Gastrocnemius medialis (tissue), 4 donors: ENCODE measurements at regions of chr3 and their contacts with region 1.

Region 1: GRCh38 chr3:45507820-45508317 is 86.7 kb upstream of the LIMD1 start:
- DNase-seq: peak in 1 of 2 donors; percentile 30
- ATAC-seq: peak in 1 of 2 donors; percentile 34
- H3K4me3 ChIP-seq: no peak overlapping the region
- H3K27ac ChIP-seq: peak overlapping the region in 2 of 4 donors; percentile 8 to 13
- H3K4me1 ChIP-seq: no peaks in the 10 kb centered on the region
- H3K27me3 ChIP-seq: no peaks in the 10 kb centered on the region
- CTCF ChIP-seq: peak in 4 of 5 experiments; percentile 3 to 46 (median 20)
- POLR2A ChIP-seq: no peak

Region 2: GRCh38 chr3:45170096-45170495 is 337.8 kb before region 1 on chr3:
- in situ Hi-C with region 1: no loop called
- intact Hi-C with region 1: no loop called
- DNase-seq: peak; percentile 68 to 74
- ATAC-seq: peak; percentile 49 to 76
- H3K4me3 ChIP-seq: no peak overlapping the region
- H3K27ac ChIP-seq: peak overlapping the region; percentile 43 to 73 (median 63)
- H3K4me1 ChIP-seq: peaks cover 8 to 25% of the 10 kb centered on the region in 2 donors
- H3K27me3 ChIP-seq: no peaks in the 10 kb centered on the region
- CTCF ChIP-seq: no peak
- POLR2A ChIP-seq: no peak

Region 3: GRCh38 chr3:45218578-45219390 is 289.1 kb before region 1 on chr3:
- in situ Hi-C with region 1: no loop called
- intact Hi-C with region 1: loop called (anchors 5 kb)
- DNase-seq: peak; percentile 44 to 64
- ATAC-seq: peak; percentile 65 to 89
- H3K4me3 ChIP-seq: no peak overlapping the region
- H3K27ac ChIP-seq: no peak overlapping the region
- H3K4me1 ChIP-seq: peaks cover 9 to 12% of the 10 kb centered on the region in 2 donors
- H3K27me3 ChIP-seq: no peaks in the 10 kb centered on the region
- CTCF ChIP-seq: no peak
- POLR2A ChIP-seq: no peak

Region 4: GRCh38 chr3:45544781-45545180 is 36.9 kb after region 1 on chr3:
- in situ Hi-C with region 1: no loop called
- intact Hi-C with region 1: loop called (anchors 1 kb)
- DNase-seq: peak in 1 of 2 donors; percentile 64
- ATAC-seq: peak; percentile 10 to 33
- H3K4me3 ChIP-seq: no peak overlapping the region
- H3K27ac ChIP-seq: peak overlapping the region; percentile 70 to 86 (median 78)
- H3K4me1 ChIP-seq: peaks cover 10 to 51% of the 10 kb centered on the region in 2 donors
- H3K27me3 ChIP-seq: no peaks in the 10 kb centered on the region
- CTCF ChIP-seq: peak in 1 of 5 experiments; percentile 13
- POLR2A ChIP-seq: no peak